AG04449 (cell line): ENCODE measurements at regions of chr5 and their contacts with region 1.

Region 1: DNA sequence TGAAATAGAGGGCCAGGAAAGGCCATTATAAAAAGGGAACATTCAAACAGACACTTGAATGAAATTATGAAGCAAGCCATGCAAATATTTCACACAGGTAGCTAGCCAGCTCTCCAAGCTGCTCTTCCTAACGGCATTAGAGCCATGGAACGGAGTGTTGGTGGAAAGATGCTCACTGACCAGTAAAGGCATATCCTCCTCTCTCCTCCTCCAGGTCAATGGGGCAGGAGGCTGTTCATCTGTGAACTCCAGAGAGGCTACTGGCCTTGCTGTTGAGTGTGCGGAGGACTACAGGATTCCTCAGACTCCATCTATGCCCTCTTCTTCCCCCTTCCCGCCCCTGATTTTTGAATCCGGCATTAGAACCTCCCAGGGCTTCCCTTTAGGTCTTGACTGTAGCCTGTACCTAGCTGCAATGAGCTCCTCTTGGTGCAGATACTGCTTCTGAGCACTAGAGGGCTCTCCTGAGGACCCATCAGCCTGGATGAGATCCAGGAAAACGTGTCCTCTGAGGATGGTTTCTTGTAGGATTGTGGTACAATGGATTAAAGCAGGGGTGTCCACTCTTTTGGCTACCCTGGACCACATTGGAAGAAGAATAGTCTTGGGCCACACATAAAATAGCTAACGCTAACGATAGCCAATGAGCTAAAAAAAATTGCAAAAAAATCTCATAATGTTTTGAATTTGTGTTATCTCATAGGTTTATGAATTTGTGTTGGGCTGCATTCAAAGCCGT is 162.2 kb downstream of the SREK1 start:
- DNase-seq: peak; percentile 14
- H3K4me3 ChIP-seq: no peak overlapping the region
- CTCF ChIP-seq: peak; percentile 91

Region 2: DNA sequence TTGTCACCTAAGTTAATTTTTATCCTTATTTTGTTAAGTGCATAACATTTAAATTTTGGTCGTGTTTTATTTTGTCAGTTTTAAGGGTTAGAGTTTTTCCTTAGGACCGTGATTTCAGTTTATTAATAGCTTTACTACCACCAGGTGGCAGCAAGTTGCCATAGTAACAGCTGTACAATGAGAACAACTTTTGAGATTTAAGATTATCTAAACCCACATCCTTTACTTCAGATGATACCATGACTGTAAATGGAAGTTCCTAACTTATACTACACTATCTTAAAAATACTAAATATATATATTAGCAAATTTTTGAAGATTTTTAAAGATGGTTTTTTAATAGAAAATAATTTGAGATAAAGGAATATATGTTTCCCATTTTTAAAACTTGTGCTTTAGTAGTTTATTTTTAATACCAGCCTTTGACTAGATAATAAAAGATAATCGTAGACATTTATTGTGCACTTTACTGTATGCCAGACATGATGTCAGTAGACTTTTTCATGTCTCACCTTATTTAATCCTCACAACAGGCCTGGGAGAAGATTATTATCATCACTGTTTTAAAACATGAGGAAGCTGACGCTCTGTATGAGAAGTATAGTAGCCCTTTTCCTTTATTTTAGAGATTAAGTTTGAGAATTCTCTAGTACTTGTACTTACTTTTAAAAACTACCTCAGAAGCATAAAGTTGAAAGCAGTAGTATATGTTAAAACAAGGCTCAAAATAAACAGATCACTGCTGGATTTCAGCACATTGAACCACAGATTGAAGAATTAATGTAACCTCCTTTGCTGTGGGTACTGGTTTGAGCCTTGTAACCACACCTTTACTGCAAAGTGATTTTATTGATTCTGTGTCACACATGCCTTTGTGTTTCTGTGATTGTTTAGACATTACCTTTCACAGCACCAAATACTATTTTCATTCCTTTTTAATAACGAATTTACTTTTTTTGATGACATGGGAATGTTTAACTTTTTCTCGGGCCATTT is 134.6 kb before region 1 on chr5:
- CTCF ChIA-PET with region 1: interaction called, 10 read pairs
- POLR2A ChIA-PET with region 1: no interaction called
- DNase-seq: peak; percentile 16
- H3K4me3 ChIP-seq: no peak overlapping the region
- CTCF ChIP-seq: no peak

Region 3: GRCh38 chr5:66247176-66247960 is 58.9 kb before region 1 on chr5:
- CTCF ChIA-PET with region 1: interaction called, 11 read pairs
- POLR2A ChIA-PET with region 1: no interaction called
- DNase-seq: peak; percentile 65
- H3K4me3 ChIP-seq: no peak overlapping the region
- CTCF ChIP-seq: no peak

Region 4: DNA sequence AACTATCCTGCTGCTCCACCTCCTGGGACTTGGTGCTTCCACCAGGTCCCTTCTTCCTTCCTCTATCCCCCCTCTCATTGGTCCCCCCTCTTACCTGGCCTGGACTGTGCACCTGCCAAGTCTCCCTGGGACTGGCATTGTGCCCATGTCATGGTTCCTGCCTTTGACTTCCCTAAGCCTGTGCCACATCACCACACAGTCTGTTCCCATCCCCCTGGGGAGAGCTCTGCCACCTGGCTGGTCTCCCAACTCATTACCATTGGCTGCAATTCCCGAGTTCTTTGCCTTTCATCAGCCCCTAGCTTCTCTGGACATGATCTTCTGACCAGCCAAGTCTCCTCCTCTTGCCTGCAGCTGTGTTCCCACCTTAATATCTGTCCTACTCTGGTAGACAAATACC is 18.1 kb after region 1 on chr5:
- CTCF ChIA-PET with region 1: interaction called, 100 read pairs
- POLR2A ChIA-PET with region 1: no interaction called
- DNase-seq: no peak
- H3K4me3 ChIP-seq: no peak overlapping the region
- CTCF ChIP-seq: no peak

Region 5: GRCh38 chr5:66757188-66757833 is 451.0 kb after region 1 on chr5:
- CTCF ChIA-PET with region 1: interaction called, 115 read pairs
- POLR2A ChIA-PET with region 1: no interaction called
- DNase-seq: peak; percentile 5
- H3K4me3 ChIP-seq: no peak overlapping the region
- CTCF ChIP-seq: no peak

Region 6: DNA sequence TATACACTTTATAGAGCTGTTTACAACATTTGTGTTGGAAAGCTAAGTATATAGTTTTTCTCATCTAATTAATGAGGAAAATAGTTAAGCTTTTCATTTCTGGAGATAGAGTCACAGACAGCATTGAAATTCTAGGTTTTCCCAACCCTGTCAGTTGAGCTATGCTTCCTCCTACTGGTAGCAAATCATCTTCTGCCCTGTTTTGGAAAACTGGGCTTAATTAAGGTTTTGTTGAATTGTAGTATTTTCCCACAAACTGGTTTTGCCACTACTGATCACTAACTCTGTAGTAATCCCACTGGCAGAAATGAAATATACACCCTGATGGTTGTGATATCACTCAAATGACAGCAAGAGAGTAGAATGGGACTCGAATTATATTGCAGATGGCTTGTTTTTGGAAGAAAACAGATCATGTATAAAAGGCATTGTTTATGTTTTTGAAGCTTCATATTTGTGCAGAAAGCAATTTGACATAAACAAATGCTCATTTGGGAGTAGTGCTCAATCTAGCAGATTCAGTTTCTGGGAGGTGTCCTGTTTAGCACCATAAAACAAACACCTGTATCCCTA is 843.8 kb after region 1 on chr5:
- CTCF ChIA-PET with region 1: interaction called, 10 read pairs
- POLR2A ChIA-PET with region 1: no interaction called
- DNase-seq: no peak
- H3K4me3 ChIP-seq: no peak overlapping the region
- CTCF ChIP-seq: peak; percentile 49